Lower leg skin (tissue), 4 donors: ENCODE measurements at regions of chr1 and their contacts with region 1.

Region 1: GRCh38 chr1:167161242-167161641 is 59.4 kb upstream of the POU2F1 start:
- DNase-seq: no peak
- H3K4me3 ChIP-seq: no peak overlapping the region
- CTCF ChIP-seq: no peak
- POLR2A ChIP-seq: no peak

Region 2: GRCh38 chr1:165539306-165539705 is 1621.9 kb before region 1 on chr1:
- intact Hi-C with region 1: loop called (anchors 5 kb)
- DNase-seq: no peak
- H3K4me3 ChIP-seq: no peak overlapping the region
- CTCF ChIP-seq: no peak
- POLR2A ChIP-seq: no peak

Region 3: GRCh38 chr1:167219646-167220536 is 58.6 kb after region 1 on chr1:
- intact Hi-C with region 1: no loop called
- DNase-seq: peak; percentile 77 to 96
- H3K4me3 ChIP-seq: peak overlapping the region; percentile 63
- CTCF ChIP-seq: no peak
- POLR2A ChIP-seq: no peak

Region 4: DNA sequence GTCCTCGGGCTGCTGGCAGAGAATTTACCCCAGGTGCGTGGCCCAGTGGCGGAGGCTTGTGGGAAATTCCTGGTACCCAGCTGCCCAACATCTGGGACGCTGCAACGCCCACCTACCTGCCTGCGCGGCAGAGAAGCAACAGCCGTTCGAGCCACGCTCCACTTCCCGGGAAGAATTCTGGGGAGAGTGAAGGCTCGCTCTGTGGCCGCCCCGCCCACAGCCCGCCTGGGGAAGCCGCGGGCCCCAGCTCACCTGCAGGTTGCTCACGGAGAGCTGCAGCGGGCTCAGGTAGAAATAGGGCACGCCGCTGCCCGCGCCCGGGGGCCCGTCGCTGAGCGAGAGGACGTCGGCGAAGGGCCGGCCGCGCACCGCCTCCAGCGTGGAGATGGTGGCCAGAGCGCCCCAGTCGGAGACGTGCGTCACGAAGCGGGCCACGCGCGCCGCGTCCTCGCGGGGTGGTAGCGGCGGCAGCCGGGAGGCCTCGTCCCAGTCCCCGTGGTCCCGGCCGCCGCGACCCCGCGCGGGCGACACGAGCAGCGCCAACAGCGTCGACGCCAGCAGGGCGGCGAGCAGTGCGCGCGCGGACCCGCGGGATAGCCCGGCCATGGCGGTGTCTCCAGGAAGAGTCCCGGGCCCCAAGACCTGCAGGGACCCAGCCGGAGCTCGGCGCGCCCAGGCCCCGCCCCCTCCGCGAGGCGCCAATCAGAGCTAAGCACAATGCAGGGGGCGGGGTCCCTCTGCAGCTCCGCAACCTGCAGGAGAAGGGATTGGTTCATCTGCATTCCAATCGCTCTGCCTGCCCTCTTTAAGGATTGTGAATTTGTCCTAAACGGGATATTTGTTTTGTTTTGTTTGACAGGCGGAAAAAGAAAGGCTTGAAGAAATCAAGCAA is 392.1 kb after region 1 on chr1 and contains the start of gene CREG1:
- intact Hi-C with region 1: no loop called
- DNase-seq: peak; percentile 91 to 99
- H3K4me3 ChIP-seq: peak within 1 kb of the TSS; percentile 68
- CTCF ChIP-seq: no peak
- POLR2A ChIP-seq: peak in 1 of 2 donors; percentile 82
- total RNA-seq, gene CREG1: 196 to 467 (median 339) TPM